Stomach (tissue), 19 donors: ENCODE measurements at regions of chr11 and their contacts with region 1.

Region 1: DNA sequence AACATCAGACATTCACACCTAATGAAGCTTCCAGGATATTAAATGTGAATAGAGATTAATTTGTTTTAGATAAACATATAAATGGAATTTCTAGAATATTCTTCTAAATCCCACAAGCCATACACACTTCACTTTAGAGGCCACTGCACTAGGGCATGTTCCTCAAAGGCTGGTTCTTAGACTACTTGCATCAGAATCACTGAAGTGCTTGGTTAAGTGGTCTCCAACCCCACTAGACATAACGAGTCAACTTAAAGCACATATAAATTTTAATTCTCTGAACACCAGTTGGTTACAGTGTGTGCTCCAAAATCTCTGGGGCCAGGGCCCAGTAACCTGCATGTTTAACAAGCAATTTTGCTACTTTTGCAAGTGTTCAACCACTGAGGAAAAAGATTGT is 7.9 kb upstream of the ALKBH8 start:
- DNase-seq: no peak
- H3K4me3 ChIP-seq: no peak overlapping the region
- H3K27ac ChIP-seq: no peak overlapping the region
- H3K4me1 ChIP-seq: no peaks in the 10 kb centered on the region
- H3K27me3 ChIP-seq: peaks cover 0 to 17% (median 0%) of the 10 kb centered on the region in 3 donors
- CTCF ChIP-seq: no peak
- EP300 ChIP-seq: no peak
- POLR2A ChIP-seq: no peak

Region 2: DNA sequence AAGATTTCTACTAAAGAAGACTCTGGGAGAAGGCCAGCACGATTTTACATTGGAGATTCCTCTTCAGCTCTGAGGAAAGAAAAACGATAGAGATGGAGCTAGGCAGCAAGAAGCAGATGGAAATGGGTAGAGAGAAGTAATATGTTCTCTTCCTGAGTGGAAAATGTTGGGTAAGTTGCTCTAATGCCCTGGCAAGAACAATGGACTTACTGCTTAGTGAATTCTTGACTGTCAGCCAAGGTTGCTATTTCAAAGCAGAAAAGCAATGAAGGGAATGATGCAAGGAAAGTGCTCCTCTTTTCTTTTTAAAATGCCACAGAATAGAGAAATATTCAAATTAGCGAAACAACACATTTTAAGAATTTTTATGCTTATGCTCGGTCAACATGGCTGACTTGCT is 77.4 kb before region 1 on chr11:
- intact Hi-C with region 1: no loop called
- DNase-seq: peak in 1 of 2 donors; percentile 15
- H3K4me3 ChIP-seq: no peak overlapping the region
- H3K27ac ChIP-seq: no peak overlapping the region
- H3K4me1 ChIP-seq: no peaks in the 10 kb centered on the region
- H3K27me3 ChIP-seq: no peaks in the 10 kb centered on the region
- CTCF ChIP-seq: no peak
- EP300 ChIP-seq: no peak
- POLR2A ChIP-seq: no peak

Region 3: DNA sequence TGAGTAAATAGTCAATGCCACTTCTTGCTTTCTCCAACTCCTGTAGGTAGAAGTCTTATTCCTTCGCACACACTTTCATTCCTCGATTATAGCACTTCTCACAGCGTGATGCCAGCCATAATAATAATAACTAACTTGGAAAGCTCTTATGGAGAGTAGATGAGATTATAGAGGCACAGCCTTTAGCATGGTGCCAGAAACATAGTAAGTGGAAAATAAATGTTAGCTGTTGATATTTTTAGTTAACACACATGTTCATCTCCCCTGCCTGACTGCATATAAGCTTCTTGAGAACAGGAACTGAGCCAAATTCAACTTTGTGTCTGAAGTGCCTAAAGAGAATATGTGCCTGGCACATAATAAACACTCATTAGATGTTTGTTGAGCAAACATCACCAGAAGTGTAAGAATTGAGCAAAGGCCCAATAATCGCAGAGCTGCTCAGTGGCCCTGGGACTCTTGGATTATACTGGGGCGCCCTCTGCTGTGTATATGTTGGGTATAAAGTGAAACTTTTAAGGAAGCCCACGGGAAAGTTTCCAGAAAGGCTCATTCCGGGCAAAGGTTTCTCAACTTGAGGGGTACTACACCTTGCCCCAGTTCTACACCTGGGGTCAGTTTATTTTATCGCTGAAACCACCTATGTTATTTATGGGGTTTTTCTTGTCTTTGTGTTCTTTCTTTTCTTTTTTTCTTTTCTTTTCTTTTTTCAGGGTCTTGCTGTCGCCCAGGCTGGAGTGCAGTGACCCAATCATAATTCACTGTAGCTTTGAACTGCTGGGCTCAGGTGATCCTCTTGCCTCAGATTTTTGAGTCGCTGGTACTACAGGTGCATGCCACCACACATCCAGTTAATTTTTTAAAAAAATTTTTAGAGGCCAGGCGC is 116.1 kb after region 1 on chr11:
- intact Hi-C with region 1: loop called (anchors 5 kb)
- DNase-seq: peak; percentile 81 to 82
- H3K4me3 ChIP-seq: peak overlapping the region in 1 of 4 donors; percentile 6
- H3K27ac ChIP-seq: no peak overlapping the region
- H3K4me1 ChIP-seq: peaks cover 0 to 9% (median 3%) of the 10 kb centered on the region in 4 donors
- H3K27me3 ChIP-seq: peaks cover 0 to 11% (median 0%) of the 10 kb centered on the region in 3 donors
- CTCF ChIP-seq: peak in 4 of 7 experiments; percentile 13 to 76 (median 40)
- EP300 ChIP-seq: no peak
- POLR2A ChIP-seq: no peak